ENCODE measurements at regions of chr7 and their contacts with region 1.

Region 1: DNA sequence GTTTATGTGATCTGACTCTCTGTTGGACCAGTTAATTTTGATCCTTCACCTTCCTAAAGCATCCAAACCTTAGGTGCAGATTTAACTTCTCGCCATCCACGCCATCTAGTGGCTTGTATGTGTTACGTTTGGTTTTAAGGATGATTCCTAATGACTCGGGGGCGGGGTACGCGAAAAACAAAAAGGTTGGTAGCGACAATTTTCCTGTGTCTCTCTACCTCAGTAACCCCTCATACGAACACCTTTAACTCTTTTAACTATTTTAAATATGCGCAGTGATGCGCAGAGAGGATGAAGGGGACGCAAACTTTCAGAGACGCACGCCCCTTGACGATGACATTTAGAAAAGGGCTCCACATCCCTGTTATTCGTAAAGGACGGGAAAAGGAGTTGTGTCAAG is 714 bp upstream of the KCND2 start:
- DNase-seq: no peak
- ATAC-seq: peak; percentile 88
- H3K4me3 ChIP-seq: peak overlapping the region; percentile 33 to 40
- H3K27ac ChIP-seq: no peak overlapping the region
- H3K4me1 ChIP-seq: no peaks in the 10 kb centered on the region; the same call in 1 of the 2 replicates
- H3K27me3 ChIP-seq: no peaks in the 10 kb centered on the region
- CTCF ChIP-seq: peak; percentile 85

Region 2: GRCh38 chr7:119270045-119270464 is 1002.2 kb before region 1 on chr7:
- CTCF ChIA-PET with region 1: no interaction called
- POLR2A ChIA-PET with region 1: no interaction called
- in situ Hi-C with region 1: no loop called
- intact Hi-C with region 1: loop called (anchors 5 kb)
- DNase-seq: peak; percentile 33
- ATAC-seq: peak; percentile 90
- H3K4me3 ChIP-seq: no peak overlapping the region
- H3K27ac ChIP-seq: no peak overlapping the region
- H3K4me1 ChIP-seq: no peaks in the 10 kb centered on the region
- H3K27me3 ChIP-seq: no peaks in the 10 kb centered on the region
- CTCF ChIP-seq: peak; percentile 93

Region 3: GRCh38 chr7:119812737-119813136 is 459.5 kb before region 1 on chr7:
- CTCF ChIA-PET with region 1: no interaction called
- POLR2A ChIA-PET with region 1: no interaction called
- in situ Hi-C with region 1: no loop called
- intact Hi-C with region 1: no loop called
- DNase-seq: no peak
- ATAC-seq: no peak
- H3K4me3 ChIP-seq: no peak overlapping the region
- H3K27ac ChIP-seq: no peak overlapping the region
- H3K4me1 ChIP-seq: no peaks in the 10 kb centered on the region
- H3K27me3 ChIP-seq: no peaks in the 10 kb centered on the region
- CTCF ChIP-seq: no peak

Region 4: GRCh38 chr7:120441850-120442249 is 169.6 kb after region 1 on chr7:
- CTCF ChIA-PET with region 1: no interaction called
- POLR2A ChIA-PET with region 1: no interaction called
- in situ Hi-C with region 1: no loop called
- intact Hi-C with region 1: no loop called
- DNase-seq: no peak
- ATAC-seq: no peak
- H3K4me3 ChIP-seq: no peak overlapping the region
- H3K27ac ChIP-seq: no peak overlapping the region
- H3K4me1 ChIP-seq: no peaks in the 10 kb centered on the region
- H3K27me3 ChIP-seq: no peaks in the 10 kb centered on the region
- CTCF ChIP-seq: no peak